Breast epithelium (tissue), 4 donors: ENCODE measurements at regions of chr5 and their contacts with region 1.

Region 1: GRCh38 chr5:52822437-52822836 is 34.7 kb downstream of the ITGA1 start:
- DNase-seq: no peak
- H3K4me3 ChIP-seq: no peak overlapping the region
- H3K27ac ChIP-seq: peak overlapping the region in 1 of 2 donors; percentile 35
- H3K4me1 ChIP-seq: no peaks in the 10 kb centered on the region
- H3K27me3 ChIP-seq: no peaks in the 10 kb centered on the region
- CTCF ChIP-seq: no peak
- POLR2A ChIP-seq: no peak

Region 2: GRCh38 chr5:52783226-52783959 is 39.0 kb before region 1 on chr5:
- intact Hi-C with region 1: no loop called
- DNase-seq: no peak
- H3K4me3 ChIP-seq: no peak overlapping the region
- H3K27ac ChIP-seq: no peak overlapping the region
- H3K4me1 ChIP-seq: no peaks in the 10 kb centered on the region
- H3K27me3 ChIP-seq: no peaks in the 10 kb centered on the region
- CTCF ChIP-seq: no peak
- POLR2A ChIP-seq: no peak

Region 3: GRCh38 chr5:52863715-52864290 is 41.4 kb after region 1 on chr5:
- intact Hi-C with region 1: loop called (anchors 2 kb)
- DNase-seq: no peak
- H3K4me3 ChIP-seq: no peak overlapping the region
- H3K27ac ChIP-seq: peak overlapping the region; percentile 13 to 58
- H3K4me1 ChIP-seq: no peaks in the 10 kb centered on the region
- H3K27me3 ChIP-seq: no peaks in the 10 kb centered on the region
- CTCF ChIP-seq: no peak
- POLR2A ChIP-seq: no peak